GM12878 (cell line): ENCODE measurements at regions of chr13 and their contacts with region 1.

Region 1: DNA sequence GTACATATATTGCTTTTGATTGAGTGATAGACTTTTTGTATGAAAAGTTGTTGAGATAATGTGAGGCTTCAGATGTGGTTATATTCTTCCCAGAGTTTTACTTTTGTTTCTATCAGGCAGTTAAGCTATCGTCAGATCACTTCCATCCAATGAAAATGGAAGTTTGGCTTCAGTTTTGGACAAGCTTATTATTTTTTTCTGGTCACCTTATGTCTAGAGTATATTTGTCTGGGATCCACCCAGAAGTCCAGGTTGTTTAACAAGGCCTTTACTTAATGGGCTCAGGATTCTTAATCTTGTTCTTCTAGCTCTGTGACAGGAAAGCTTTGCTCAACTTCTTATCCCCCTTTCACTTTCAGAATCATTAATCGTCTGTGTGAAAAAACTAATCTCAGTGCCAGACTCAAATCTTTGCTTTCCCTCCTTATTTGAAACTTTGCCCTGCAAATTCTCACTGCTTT is 150.9 kb downstream of the PDS5B start:
- DNase-seq: peak; percentile 63
- ATAC-seq: peak; percentile 84
- H3K4me3 ChIP-seq: peak overlapping the region; percentile 51
- H3K27ac ChIP-seq: peak overlapping the region; percentile 90
- H3K4me1 ChIP-seq: no peaks in the 10 kb centered on the region
- H3K27me3 ChIP-seq: no peaks in the 10 kb centered on the region
- CTCF ChIP-seq: no peak
- EP300 ChIP-seq: no peak
- POLR2A ChIP-seq: no peak
- RAD21 ChIP-seq: no peak

Region 2: DNA sequence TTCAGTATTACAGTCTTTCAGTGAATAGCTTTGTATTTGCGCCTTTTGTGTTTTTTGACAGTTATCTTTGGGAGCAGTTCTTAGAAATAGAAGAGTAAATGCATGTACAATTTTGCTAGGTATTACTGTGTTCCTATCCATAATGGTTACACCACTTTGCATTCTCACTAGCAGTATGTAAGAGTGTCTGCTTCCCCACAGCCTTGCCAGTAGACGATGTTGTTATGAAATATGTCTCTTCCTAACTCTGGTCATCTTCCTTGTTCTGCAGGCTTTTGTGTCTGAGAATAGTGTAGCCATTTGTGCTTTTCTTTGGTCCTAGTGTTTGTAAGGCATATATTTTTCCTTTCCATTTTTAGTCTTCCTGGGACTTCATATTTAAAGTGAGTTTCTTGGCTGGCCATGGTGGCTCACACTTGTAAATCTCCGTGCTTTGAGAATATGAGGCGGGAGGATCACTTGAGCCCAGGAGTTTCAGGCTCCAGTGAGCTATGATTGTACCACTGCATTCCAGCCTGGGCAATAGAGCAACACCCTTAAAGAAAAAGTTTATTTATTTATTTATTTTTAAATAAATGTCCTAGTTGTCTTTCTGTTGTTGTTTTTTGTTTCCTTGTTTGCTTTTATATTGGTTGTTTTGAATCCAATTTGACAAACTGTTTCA is 10.6 kb before region 1 on chr13:
- CTCF ChIA-PET with region 1: interaction called, 4 read pairs
- POLR2A ChIA-PET with region 1: no interaction called
- RAD21 ChIA-PET with region 1: interaction called, 5 read pairs
- SMC1A ChIA-PET with region 1: interaction called, 29 read pairs
- in situ Hi-C with region 1: no loop called
- intact Hi-C with region 1: no loop called
- DNase-seq: no peak
- ATAC-seq: no peak
- H3K4me3 ChIP-seq: no peak overlapping the region
- H3K27ac ChIP-seq: no peak overlapping the region
- H3K4me1 ChIP-seq: no peaks in the 10 kb centered on the region
- H3K27me3 ChIP-seq: no peaks in the 10 kb centered on the region
- CTCF ChIP-seq: no peak
- EP300 ChIP-seq: no peak
- POLR2A ChIP-seq: no peak
- RAD21 ChIP-seq: no peak